ENCODE measurements at regions of chr7 and their contacts with region 1.

Region 1: GRCh38 chr7:17134786-17135185 is 163.7 kb upstream of the AHR start:
- DNase-seq: no peak
- H3K4me3 Mint-ChIP-seq: no peak overlapping the region
- H3K27ac Mint-ChIP-seq: peak overlapping the region; percentile 77
- H3K4me1 Mint-ChIP-seq: peaks cover 70% of the 10 kb centered on the region
- H3K27me3 Mint-ChIP-seq: no peaks in the 10 kb centered on the region

Region 2: GRCh38 chr7:16982640-16983350 is 152.0 kb before region 1 on chr7:
- intact Hi-C with region 1: loop called (anchors 5 kb)
- DNase-seq: no peak
- H3K4me3 Mint-ChIP-seq: peak overlapping the region; percentile 51
- H3K27ac Mint-ChIP-seq: no peak overlapping the region
- H3K4me1 Mint-ChIP-seq: peaks cover 17% of the 10 kb centered on the region
- H3K27me3 Mint-ChIP-seq: peaks cover 49% of the 10 kb centered on the region

Region 3: GRCh38 chr7:17021180-17021579 is 113.6 kb before region 1 on chr7:
- intact Hi-C with region 1: loop called (anchors 1 kb)
- DNase-seq: no peak
- H3K4me3 Mint-ChIP-seq: no peak overlapping the region
- H3K27ac Mint-ChIP-seq: no peak overlapping the region
- H3K4me1 Mint-ChIP-seq: peaks cover 21% of the 10 kb centered on the region
- H3K27me3 Mint-ChIP-seq: peaks cover 3% of the 10 kb centered on the region

Region 4: GRCh38 chr7:17152721-17153120 is 17.9 kb after region 1 on chr7:
- intact Hi-C with region 1: loop called (anchors 2 kb)
- DNase-seq: no peak
- H3K4me3 Mint-ChIP-seq: no peak overlapping the region
- H3K27ac Mint-ChIP-seq: peak overlapping the region; percentile 31
- H3K4me1 Mint-ChIP-seq: peaks cover 52% of the 10 kb centered on the region
- H3K27me3 Mint-ChIP-seq: no peaks in the 10 kb centered on the region